ENCODE measurements at regions of chr6 and their contacts with region 1.

Region 1: GRCh38 chr6:73514746-73515110 is 6.1 kb downstream of the EEF1A1 start:
- DNase-seq: no peak

Region 2: DNA sequence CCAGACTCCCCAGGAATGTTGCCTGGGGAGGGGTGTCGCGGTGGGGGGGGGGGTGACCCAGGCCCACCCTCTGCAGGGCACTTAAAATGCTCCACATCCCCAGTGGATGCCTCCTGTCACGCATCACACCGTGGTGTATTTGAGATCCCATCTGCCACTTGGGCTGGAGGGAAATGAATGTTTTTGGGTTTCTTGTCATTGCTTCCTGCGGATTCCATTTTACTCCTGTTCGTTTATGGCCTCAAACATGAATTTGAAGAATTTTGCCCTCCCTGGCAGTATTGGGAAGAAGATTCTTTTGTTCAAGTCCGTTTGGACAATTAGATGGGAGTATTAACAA is 251.2 kb before region 1 on chr6:
- intact Hi-C with region 1: no loop called
- DNase-seq: no peak

Region 3: GRCh38 chr6:73653571-73654424 is 139.1 kb after region 1 on chr6 and contains the start of gene SLC17A5:
- intact Hi-C with region 1: loop called in 1 of 2 experiments (anchors 5 kb)
- DNase-seq: peak; percentile 98
- total RNA-seq, gene SLC17A5: 15.2 to 16.6 TPM

Measured in posterior vena cava (tissue), 2 donors.